ENCODE measurements at regions of chr22 and their contacts with region 1.

Region 1: GRCh38 chr22:41448189-41448808 is 1.7 kb upstream of the TOB2 start:
- DNase-seq: peak; percentile 77 to 97 (median 88)
- ATAC-seq: peak; percentile 70
- H3K4me3 ChIP-seq: peak overlapping the region; percentile 79 to 96
- H3K4me3 Mint-ChIP-seq: peak overlapping the region; percentile 90
- H3K27ac ChIP-seq: peak overlapping the region; percentile 78 to 99
- H3K27ac Mint-ChIP-seq: peak overlapping the region; percentile 98
- H3K4me1 ChIP-seq: peaks cover 11% of the 10 kb centered on the region
- H3K4me1 Mint-ChIP-seq: peaks cover 23% of the 10 kb centered on the region
- H3K27me3 ChIP-seq: no peaks in the 10 kb centered on the region
- H3K27me3 Mint-ChIP-seq: no peaks in the 10 kb centered on the region
- CTCF ChIP-seq: no peak

Region 2: GRCh38 chr22:41589391-41590241 is 141.3 kb after region 1 on chr22 and contains the start of gene PMM1:
- CTCF ChIA-PET with region 1: no interaction called
- POLR2A ChIA-PET with region 1: interaction called, 11 read pairs
- intact Hi-C with region 1: loop called in 1 of 2 experiments (anchors 2 kb)
- DNase-seq: peak; percentile 100
- ATAC-seq: peak; percentile 97
- H3K4me3 ChIP-seq: peak within 1 kb of the TSS; percentile 94 to 98
- H3K4me3 Mint-ChIP-seq: peak within 1 kb of the TSS; percentile 92
- H3K27ac ChIP-seq: peak within 1 kb of the TSS; percentile 50 to 75
- H3K27ac Mint-ChIP-seq: peak within 1 kb of the TSS; percentile 88
- H3K4me1 ChIP-seq: peaks cover 17% of the 10 kb centered on the region
- H3K4me1 Mint-ChIP-seq: peaks cover 20% of the 10 kb centered on the region
- H3K27me3 ChIP-seq: no peaks in the 10 kb centered on the region
- H3K27me3 Mint-ChIP-seq: no peaks in the 10 kb centered on the region
- CTCF ChIP-seq: no peak
- total RNA-seq, gene PMM1: 19.1 to 22.4 TPM

Region 3: GRCh38 chr22:42079319-42080251 is 631.3 kb after region 1 on chr22 and contains the start of gene SMDT1:
- CTCF ChIA-PET with region 1: no interaction called
- POLR2A ChIA-PET with region 1: no interaction called
- intact Hi-C with region 1: loop called in 1 of 2 experiments (anchors 10 kb)
- DNase-seq: peak; percentile 95 to 99 (median 98)
- ATAC-seq: peak; percentile 92
- H3K4me3 ChIP-seq: peak within 1 kb of the TSS; percentile 79 to 80
- H3K4me3 Mint-ChIP-seq: peak within 1 kb of the TSS; percentile 93
- H3K27ac ChIP-seq: peak within 1 kb of the TSS; percentile 89 to 97
- H3K27ac Mint-ChIP-seq: peak within 1 kb of the TSS; percentile 98
- H3K4me1 ChIP-seq: peaks cover 21% of the 10 kb centered on the region
- H3K4me1 Mint-ChIP-seq: peaks cover 36% of the 10 kb centered on the region
- H3K27me3 ChIP-seq: no peaks in the 10 kb centered on the region
- H3K27me3 Mint-ChIP-seq: no peaks in the 10 kb centered on the region
- CTCF ChIP-seq: no peak
- total RNA-seq, gene SMDT1: 30.4 to 34.5 TPM

Measured in CD8-positive, alpha-beta T cell (primary cell).